ENCODE measurements at regions of chr19 and their contacts with region 1.

Region 1: GRCh38 chr19:53103198-53103944 is at the start of gene ZNF160:
- DNase-seq: peak; percentile 100
- ATAC-seq: peak; percentile 97
- H3K4me3 Mint-ChIP-seq: peak within 1 kb of the TSS; percentile 87
- H3K27ac Mint-ChIP-seq: peak within 1 kb of the TSS; percentile 93
- H3K4me1 Mint-ChIP-seq: peaks cover 32% of the 10 kb centered on the region
- H3K27me3 Mint-ChIP-seq: no peaks in the 10 kb centered on the region
- CTCF ChIP-seq: no peak
- total RNA-seq, gene ZNF160: 46.3 and 61.3 TPM in 2 replicates

Region 2: DNA sequence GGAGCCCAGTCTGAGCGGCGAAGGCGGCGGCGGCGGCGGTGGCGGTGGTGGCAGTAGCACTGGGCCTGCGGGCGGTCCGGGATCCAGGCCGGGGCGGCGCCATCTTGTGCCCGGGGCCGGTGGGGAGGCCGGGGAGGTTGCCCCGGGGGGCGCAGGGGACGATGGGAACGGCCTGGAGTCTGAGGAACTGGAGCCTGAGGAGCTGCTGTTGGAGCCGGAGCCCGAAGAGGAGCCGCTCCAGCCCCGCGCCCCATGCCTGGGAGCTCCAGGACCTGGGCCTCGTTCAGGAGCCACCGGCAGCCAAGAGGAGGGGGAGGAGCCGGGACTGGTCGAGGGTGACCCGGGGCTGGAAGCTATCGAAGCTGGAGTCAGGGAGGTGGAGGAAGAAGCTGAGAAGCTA is 293.6 kb before region 1 on chr19:
- CTCF ChIA-PET with region 1: no interaction called
- POLR2A ChIA-PET with region 1: no interaction called
- intact Hi-C with region 1: no loop called
- DNase-seq: no peak
- ATAC-seq: no peak
- H3K4me3 Mint-ChIP-seq: no peak overlapping the region
- H3K27ac Mint-ChIP-seq: no peak overlapping the region
- H3K4me1 Mint-ChIP-seq: no peaks in the 10 kb centered on the region
- H3K27me3 Mint-ChIP-seq: no peaks in the 10 kb centered on the region
- CTCF ChIP-seq: no peak

Region 3: DNA sequence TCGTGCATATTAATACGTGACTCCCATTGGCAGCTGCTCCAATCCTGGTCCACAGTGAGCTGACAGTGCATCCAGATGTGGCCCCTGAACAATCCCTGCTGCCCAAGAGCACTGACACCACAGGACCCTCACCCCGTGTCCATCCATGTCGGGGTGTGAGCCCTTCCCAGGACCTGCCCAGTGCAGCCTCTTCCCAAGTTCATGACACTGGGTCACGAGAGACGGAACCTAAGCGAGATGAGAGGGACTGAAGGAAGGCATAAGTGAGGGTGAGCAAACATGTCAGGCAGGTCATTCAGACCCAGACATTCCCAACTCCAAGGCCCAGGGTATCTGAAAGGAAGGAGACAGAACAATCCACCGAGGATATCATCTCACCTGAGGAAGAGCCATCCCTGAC is 249.5 kb before region 1 on chr19:
- CTCF ChIA-PET with region 1: no interaction called
- POLR2A ChIA-PET with region 1: no interaction called
- intact Hi-C with region 1: loop called (anchors 5 kb)
- DNase-seq: no peak
- ATAC-seq: no peak
- H3K4me3 Mint-ChIP-seq: no peak overlapping the region
- H3K27ac Mint-ChIP-seq: no peak overlapping the region
- H3K4me1 Mint-ChIP-seq: peaks cover 22% of the 10 kb centered on the region
- H3K27me3 Mint-ChIP-seq: no peaks in the 10 kb centered on the region
- CTCF ChIP-seq: no peak

Region 4: DNA sequence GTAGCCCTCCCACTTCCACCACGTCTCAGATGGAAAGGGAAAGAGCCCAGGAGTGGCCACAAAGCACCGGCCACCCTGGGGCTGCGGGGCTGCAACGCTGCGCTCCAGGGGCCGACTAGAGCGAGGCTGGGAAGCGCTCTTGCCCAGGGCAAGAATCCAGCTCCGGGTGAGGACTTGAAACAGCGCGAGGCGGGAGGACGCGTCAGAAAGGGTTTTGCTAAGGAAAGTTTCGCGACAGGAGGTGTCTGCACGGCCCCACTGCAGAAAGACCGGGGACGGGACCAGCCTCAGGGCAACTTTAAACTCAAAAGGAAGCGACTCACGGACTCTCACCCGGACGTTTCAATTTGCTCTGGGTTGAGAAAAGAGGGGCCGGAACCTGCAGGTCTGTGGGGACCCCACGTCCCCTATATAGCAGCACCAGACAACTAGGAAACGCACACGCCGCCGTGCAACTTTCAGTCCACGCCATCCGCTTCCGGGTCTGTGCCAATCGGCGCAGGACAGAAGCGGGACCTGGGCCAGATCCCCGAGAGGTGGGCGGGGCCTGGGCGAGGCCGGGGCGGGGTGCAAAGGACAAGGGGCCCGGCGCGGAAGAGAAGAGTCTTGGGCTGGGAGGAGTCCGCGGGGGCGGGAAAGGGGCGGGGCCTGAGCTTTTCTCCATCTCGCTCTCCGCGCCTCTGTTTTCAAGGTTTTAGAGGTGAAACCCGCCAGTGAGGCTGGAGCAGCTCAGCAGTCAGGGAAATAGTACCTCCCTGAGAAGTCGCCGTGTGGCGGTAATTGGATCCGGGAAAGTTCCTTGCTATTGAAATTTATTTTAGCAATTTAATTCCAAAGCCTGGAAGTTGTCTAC is 140.8 kb before region 1 on chr19 and contains the start of gene ZNF816:
- CTCF ChIA-PET with region 1: no interaction called
- POLR2A ChIA-PET with region 1: interaction called, 5 read pairs
- intact Hi-C with region 1: loop called (anchors 1 kb)
- DNase-seq: peak; percentile 97
- ATAC-seq: peak; percentile 99
- H3K4me3 Mint-ChIP-seq: peak within 1 kb of the TSS; percentile 94
- H3K27ac Mint-ChIP-seq: peak within 1 kb of the TSS; percentile 92
- H3K4me1 Mint-ChIP-seq: peaks cover 31% of the 10 kb centered on the region
- H3K27me3 Mint-ChIP-seq: no peaks in the 10 kb centered on the region
- CTCF ChIP-seq: no peak
- total RNA-seq, gene ZNF816: 17.0 and 18.0 TPM in 2 replicates

Region 5: DNA sequence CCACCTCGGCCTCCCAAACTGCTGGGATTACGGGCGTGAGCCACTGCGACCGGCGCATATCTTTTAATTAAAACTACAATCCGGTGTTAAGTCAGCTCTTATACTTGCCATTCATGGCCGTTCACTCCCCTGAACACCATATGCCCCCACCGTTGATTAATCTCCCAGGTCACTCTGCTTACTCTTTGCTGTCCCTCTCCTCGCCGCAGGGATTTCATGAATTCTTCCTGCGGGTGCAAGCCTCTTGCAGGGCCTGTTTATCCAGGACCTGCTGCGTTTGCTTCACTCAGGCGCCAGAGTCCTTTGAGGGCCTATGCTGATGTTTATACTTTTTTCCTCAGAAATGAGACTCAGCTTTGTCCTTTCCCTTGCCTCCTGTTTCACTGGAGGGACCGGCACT is 57.8 kb before region 1 on chr19:
- CTCF ChIA-PET with region 1: no interaction called
- POLR2A ChIA-PET with region 1: no interaction called
- intact Hi-C with region 1: no loop called
- DNase-seq: no peak
- ATAC-seq: no peak
- H3K4me3 Mint-ChIP-seq: no peak overlapping the region
- H3K27ac Mint-ChIP-seq: no peak overlapping the region
- H3K4me1 Mint-ChIP-seq: no peaks in the 10 kb centered on the region
- H3K27me3 Mint-ChIP-seq: peaks cover 1% of the 10 kb centered on the region
- CTCF ChIP-seq: no peak

Region 6: DNA sequence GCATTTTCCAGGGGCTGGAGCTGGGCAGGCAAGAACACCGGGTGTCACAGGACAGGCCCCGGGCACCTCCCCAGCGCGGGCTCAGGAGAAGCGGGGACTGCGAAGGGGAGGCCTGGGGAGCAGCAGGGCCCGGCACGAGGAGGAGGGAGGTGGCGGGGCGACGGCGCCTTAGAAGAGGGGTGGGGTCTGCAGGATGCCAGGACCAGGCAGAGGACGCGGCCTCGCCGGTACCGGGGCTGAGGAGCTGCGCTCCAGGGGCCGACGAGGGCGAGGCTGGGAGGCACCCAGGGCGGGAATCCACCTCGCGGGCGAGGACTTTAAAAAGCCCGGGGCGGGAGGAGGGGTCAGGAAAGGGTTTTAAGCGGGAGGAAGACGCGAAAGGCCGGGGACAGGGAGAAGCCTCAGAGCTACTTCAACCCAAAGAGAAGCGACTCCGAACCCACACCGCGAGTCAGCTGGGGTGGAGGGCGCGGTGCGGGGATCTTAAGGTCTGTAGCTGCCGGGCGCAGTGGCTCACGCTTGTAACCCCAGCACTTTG is 54.8 kb after region 1 on chr19:
- CTCF ChIA-PET with region 1: no interaction called
- POLR2A ChIA-PET with region 1: interaction called, 4 read pairs
- intact Hi-C with region 1: loop called (anchors 1 kb)
- DNase-seq: peak; percentile 32
- ATAC-seq: peak; percentile 16
- H3K4me3 Mint-ChIP-seq: peak overlapping the region; percentile 89
- H3K27ac Mint-ChIP-seq: peak overlapping the region; percentile 79
- H3K4me1 Mint-ChIP-seq: peaks cover 24% of the 10 kb centered on the region
- H3K27me3 Mint-ChIP-seq: no peaks in the 10 kb centered on the region
- CTCF ChIP-seq: no peak

Region 7: DNA sequence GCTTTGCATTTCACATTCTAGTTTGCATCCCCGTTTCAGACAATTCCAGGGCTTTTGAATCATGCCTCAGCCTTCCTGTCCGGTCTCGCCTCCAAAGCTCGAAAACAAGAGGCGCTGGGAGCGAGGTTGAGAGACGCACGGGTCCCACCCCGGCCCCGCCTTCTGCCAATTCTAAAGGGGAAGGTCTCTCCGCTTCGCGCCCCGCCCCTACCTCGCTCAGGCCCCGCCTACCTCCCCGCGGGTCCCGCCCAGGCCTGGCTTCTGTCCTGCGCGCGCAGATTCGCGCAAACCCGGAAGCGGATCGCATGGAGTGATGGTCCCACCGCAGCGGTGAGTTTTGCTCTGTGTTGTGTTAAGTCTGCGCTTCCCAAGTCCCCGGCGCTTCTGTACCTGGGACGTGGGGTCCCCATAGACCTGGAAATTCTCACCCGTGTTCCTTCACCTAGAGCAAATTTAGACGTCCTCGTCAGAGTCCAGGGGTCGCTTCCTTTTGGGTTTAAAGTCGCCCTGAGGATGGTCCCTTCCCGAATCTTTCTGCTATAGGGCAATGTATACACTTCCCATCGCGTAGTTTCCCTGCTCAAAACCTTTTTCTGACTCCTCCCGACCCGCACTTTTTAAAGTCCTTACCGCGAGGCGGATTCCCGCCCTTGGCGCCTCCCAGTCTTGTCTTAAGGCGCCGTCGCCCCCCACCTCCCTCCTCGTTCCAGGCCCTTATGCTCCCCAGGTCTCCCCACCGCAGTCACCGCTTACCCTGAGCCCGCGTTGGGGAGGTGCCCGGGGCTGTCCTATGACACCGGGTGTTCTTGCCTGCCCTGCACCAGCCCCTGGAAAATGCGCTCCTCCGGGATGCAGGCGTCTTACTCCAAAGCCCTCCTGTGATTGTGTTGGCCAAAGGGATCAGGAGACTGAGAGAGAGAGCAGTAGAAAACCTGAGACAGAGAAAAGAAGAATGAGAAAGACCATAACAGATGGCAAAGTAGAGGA is 230.4 kb after region 1 on chr19 and contains the start of gene ZNF845:
- CTCF ChIA-PET with region 1: no interaction called
- POLR2A ChIA-PET with region 1: no interaction called
- intact Hi-C with region 1: loop called (anchors 2 kb)
- DNase-seq: peak; percentile 99
- ATAC-seq: peak; percentile 99
- H3K4me3 Mint-ChIP-seq: peak within 1 kb of the TSS; percentile 95
- H3K27ac Mint-ChIP-seq: peak within 1 kb of the TSS; percentile 91
- H3K4me1 Mint-ChIP-seq: peaks cover 30% of the 10 kb centered on the region
- H3K27me3 Mint-ChIP-seq: peaks cover 4% of the 10 kb centered on the region
- CTCF ChIP-seq: no peak
- total RNA-seq, gene ZNF845: 11.6 and 11.9 TPM in 2 replicates

Region 8: GRCh38 chr19:53520550-53521372 is 417.4 kb after region 1 on chr19:
- CTCF ChIA-PET with region 1: no interaction called
- POLR2A ChIA-PET with region 1: no interaction called
- intact Hi-C with region 1: loop called (anchors 1 kb)
- DNase-seq: peak; percentile 71
- ATAC-seq: peak; percentile 97
- H3K4me3 Mint-ChIP-seq: peak overlapping the region; percentile 94
- H3K27ac Mint-ChIP-seq: peak overlapping the region; percentile 87
- H3K4me1 Mint-ChIP-seq: peaks cover 16% of the 10 kb centered on the region
- H3K27me3 Mint-ChIP-seq: no peaks in the 10 kb centered on the region
- CTCF ChIP-seq: no peak